Right ventricle myocardium superior (tissue), 1 donor: ENCODE measurements at regions of chr4 and their contacts with region 1.

Region 1: GRCh38 chr4:87973283-87974169 is 2.0 kb upstream of the SPP1 start:
- DNase-seq: peak; percentile 62
- ATAC-seq: peak; percentile 88

Region 2: DNA sequence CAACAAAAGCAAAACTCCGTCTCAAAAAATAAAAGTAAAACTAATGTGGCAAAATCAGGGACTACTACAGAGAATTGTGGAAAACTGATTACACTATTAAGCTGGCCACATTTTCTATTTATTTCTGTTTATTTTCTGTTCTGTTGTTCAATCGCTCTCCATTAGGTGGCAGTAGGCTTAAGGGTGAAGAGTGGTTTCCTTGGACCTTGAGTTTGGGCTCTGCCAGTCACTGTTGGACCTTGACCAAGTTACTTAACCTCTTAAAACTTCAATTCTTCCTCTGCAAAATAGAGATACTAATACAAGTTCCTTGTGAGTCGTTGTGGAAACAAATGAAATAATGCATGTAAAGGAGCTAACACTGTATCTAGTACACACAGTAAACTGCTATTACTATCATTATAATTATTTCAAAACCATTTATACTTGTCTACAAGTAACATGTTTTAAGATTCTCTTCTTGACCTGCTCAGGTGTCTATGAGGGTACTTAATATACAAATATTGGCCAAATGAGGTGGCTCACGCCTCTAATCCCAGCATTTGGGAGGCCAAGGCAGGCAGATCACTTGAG is 597.7 kb before region 1 on chr4:
- intact Hi-C with region 1: loop called (anchors 10 kb)
- DNase-seq: no peak
- ATAC-seq: peak; percentile 91

Region 3: GRCh38 chr4:87451537-87451936 is 522.0 kb before region 1 on chr4:
- intact Hi-C with region 1: no loop called
- DNase-seq: no peak
- ATAC-seq: no peak

Region 4: DNA sequence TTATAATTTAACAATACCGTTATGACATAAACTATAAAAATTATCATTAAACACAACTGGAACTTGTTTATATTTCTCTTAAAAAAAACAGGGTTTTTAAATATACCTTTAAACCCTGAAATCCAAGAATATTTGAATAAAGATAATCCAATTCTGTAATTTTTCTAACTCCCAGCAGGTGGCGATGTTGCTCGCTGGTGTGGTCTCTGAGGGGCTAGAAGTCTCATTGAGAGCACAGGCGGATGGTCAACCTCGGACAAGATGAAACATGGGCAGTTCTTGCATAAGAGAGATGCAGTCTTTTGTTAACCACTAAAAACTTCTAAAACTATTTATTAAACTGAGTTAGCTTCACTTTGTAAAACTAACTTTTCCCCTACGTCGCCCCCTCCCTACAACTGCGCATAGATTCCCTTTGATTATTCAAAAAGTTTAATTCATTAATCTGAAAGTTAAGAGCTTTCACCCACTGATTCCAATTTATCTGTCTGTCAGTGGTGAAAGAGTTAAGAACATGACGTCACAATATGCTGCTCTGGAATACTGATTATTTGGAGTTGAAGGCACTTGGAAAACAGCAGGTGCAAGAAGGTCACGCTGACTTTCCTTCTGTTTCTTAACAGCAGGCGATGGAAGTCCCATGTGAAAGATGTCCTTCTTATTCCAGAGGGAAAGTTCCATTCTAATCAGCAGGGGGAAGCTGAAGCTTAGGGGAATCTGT is 293.9 kb before region 1 on chr4:
- intact Hi-C with region 1: loop called (anchors 10 kb)
- DNase-seq: peak; percentile 56
- ATAC-seq: peak; percentile 90

Region 5: DNA sequence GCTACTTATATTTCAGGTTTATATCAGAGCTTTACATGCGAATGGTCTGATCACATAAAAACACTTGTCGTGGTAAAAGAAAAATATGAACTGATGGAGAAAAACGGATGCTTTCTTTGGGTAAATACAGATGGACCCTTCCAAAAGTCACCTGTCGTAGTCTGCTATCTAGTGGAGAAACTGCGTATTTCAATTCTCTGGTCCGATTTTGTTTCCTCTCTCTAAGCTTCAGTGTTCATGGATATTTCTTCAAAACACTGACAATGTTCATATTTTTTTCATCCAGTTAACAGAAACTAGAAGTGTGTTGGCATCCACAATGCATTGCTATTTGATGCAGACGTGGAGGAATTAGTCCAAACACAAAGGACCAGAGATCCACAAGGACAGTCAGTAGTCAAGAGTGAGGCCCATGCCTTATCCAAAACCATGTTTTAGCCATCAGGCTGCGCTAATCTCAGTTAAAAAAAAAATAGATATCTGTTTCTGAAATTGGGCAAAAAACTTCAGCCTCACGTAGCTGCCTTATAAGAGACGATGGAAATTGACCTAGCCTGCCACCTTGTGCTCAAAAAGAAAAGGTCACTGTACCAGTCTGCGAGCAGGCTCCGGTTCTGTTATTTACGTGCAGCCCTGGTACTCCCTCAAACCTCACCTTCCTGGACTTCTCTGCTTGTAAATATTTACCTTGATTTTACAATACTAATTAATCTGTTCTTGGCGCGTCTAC is 124.7 kb before region 1 on chr4:
- intact Hi-C with region 1: loop called (anchors 2 kb)
- DNase-seq: no peak
- ATAC-seq: peak; percentile 89